Left cardiac atrium (tissue), 4 donors: ENCODE measurements at regions of chr22 and their contacts with region 1.

Region 1: DNA sequence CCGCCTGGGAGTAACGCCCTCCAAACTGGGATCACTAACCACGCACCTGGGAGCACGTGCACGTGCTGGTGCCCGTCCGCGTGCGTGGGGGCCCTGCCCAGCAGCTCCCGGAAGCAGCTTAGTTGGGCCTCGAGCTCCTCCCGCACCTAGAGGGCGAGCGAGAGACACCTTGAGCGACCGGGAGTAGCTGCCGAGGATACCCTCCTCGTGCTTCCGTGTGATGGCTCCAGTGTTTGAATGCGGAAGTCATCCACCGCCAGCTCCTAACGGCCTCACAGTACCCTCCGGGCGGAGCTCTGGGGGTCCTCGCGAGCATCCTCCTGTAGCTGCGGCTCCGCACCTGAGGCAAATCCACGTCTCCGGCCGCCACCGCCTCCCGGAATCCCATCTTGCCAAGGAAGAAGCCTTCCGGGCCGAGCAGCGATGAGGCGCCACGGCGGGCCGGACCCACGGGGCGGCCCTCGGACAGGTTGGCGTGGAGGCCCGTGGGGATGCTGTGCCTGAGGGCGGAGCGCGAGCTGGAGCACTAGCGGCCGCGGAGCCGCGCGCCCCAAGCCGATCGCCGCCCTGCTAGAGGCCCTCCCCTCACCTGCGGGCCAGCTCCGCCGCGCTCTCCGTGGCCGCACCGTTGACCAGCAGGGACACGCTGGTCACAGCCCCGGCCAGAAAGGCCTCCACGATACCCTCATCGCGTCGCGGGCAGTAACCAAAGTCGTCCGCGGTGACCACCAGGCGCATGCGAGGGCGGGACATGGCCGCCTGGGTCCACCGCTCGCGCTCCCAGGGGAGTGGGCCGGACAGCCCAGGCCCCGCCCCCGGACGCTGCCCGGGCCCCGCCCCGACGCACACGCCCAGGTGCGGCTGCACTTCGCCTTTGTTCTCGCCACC is at the start of gene YDJC:
- DNase-seq: peak; percentile 94
- ATAC-seq: peak; percentile 97
- total RNA-seq, gene YDJC: 5.7 to 6.4 TPM

Region 2: DNA sequence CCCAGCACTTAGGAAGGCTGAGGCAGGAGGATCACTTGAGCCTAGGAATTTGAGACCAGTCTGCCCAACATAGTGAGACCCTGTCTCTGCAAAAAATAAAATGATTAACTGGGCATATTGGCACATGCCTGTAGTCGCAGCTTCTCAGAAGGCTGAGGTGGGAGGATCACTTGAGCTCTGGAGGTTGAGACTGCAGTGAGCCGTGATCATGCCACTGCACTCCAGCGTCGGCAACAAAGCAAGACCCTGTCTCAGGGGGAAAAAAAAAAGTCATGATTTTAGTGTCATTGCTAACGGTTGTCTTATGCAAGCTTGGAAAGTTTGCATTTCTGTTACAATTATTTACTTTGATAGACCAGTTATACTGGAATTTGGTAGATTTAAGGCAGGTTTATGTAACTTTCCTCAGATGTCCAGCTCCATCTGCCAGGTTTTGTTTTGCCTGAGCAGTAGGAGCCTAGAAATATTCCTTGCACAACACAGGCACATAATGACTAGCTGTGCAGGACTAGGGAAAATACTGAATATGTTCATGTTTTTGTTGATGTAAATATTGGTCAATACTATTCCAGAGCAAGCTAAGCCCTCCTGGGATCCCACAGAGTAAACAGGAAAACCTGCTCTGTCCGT is 49.9 kb before region 1 on chr22:
- intact Hi-C with region 1: loop called in 1 of 2 experiments (anchors 5 kb)
- DNase-seq: no peak
- ATAC-seq: no peak

Region 3: GRCh38 chr22:21593406-21594232 is 35.9 kb before region 1 on chr22:
- intact Hi-C with region 1: loop called in 1 of 2 experiments (anchors 5 kb)
- DNase-seq: peak; percentile 72
- ATAC-seq: peak; percentile 62